ENCODE measurements at regions of chr9 and their contacts with region 1.

Region 1: DNA sequence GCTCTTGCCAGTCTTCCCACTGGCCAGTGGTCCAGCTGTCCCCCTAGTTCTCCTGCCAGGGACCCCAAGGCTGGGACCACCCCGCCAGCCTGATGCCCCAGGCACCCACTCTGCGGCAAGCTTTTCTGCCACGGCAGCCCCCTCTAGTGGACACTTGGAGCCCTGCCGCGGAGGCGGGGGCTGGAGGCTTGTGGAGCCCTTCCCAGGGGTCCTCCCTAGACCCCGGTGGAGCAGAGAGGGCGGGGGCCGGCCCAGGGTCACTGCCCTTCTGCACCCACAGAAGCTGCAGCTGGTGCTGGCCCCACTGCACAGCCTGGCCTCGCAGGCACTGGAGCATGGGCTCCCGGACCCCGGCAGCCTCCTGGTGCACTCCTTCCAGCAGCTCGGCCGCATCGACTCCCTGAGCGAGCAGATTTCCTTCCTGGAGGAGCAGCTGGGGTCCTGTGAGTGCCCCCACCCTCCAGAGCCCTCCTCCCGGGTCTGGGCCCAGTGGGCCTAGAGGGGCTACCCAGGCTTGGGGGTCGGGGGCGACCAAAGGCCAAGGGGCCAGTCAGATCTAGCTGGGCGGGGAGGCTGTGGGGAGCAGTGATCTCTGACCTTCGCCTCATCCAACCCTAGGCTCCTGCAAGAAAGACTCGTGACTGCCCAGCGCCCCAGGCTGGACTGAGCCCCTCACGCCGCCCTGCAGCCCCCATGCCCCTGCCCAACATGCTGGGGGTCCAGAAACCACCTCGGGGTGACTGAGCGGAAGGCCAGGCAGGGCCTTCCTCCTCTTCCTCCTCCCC is 9.1 kb downstream of the EGFL7 start:
- DNase-seq: peak; percentile 60
- ATAC-seq: peak; percentile 52
- H3K4me3 ChIP-seq: no peak overlapping the region
- H3K4me3 Mint-ChIP-seq: no peak overlapping the region
- H3K27ac ChIP-seq: no peak overlapping the region
- H3K27ac Mint-ChIP-seq: no peak overlapping the region
- H3K4me1 ChIP-seq: peaks cover 0 to 5% of the 10 kb centered on the region in 2 donors
- H3K4me1 Mint-ChIP-seq: peaks cover 3% of the 10 kb centered on the region
- H3K27me3 ChIP-seq: peaks cover 0 to 15% (median 5%) of the 10 kb centered on the region in 4 experiments
- H3K27me3 Mint-ChIP-seq: peaks cover 5% of the 10 kb centered on the region
- CTCF ChIP-seq: peak; percentile 85

Region 2: GRCh38 chr9:136539427-136540421 is 132.1 kb before region 1 on chr9:
- CTCF ChIA-PET with region 1: no interaction called
- POLR2A ChIA-PET with region 1: interaction called, 12 read pairs
- intact Hi-C with region 1: no loop called
- DNase-seq: peak; percentile 85
- ATAC-seq: peak; percentile 69
- H3K4me3 ChIP-seq: peak overlapping the region in 4 of 5 experiments; percentile 7 to 48 (median 26)
- H3K4me3 Mint-ChIP-seq: peak overlapping the region; percentile 83
- H3K27ac ChIP-seq: peak overlapping the region; percentile 57 to 80
- H3K27ac Mint-ChIP-seq: peak overlapping the region; percentile 89
- H3K4me1 ChIP-seq: peaks cover 63 to 75% of the 10 kb centered on the region in 2 donors
- H3K4me1 Mint-ChIP-seq: peaks cover 73% of the 10 kb centered on the region
- H3K27me3 ChIP-seq: no peaks in the 10 kb centered on the region
- H3K27me3 Mint-ChIP-seq: no peaks in the 10 kb centered on the region
- CTCF ChIP-seq: no peak

Region 3: GRCh38 chr9:136686794-136687711 is 15.2 kb after region 1 on chr9 and contains the start of gene AGPAT2:
- CTCF ChIA-PET with region 1: interaction called, 17 read pairs
- POLR2A ChIA-PET with region 1: no interaction called
- intact Hi-C with region 1: no loop called
- DNase-seq: peak; percentile 83
- ATAC-seq: peak; percentile 96
- H3K4me3 ChIP-seq: peak within 1 kb of the TSS; percentile 23 to 76 (median 72)
- H3K4me3 Mint-ChIP-seq: peak within 1 kb of the TSS; percentile 83
- H3K27ac ChIP-seq: peak within 1 kb of the TSS in 1 of 2 donors; percentile 64
- H3K27ac Mint-ChIP-seq: peak within 1 kb of the TSS; percentile 75
- H3K4me1 ChIP-seq: peaks cover 14 to 22% of the 10 kb centered on the region in 2 donors
- H3K4me1 Mint-ChIP-seq: peaks cover 14% of the 10 kb centered on the region
- H3K27me3 ChIP-seq: no peaks in the 10 kb centered on the region
- H3K27me3 Mint-ChIP-seq: no peaks in the 10 kb centered on the region
- CTCF ChIP-seq: no peak
- total RNA-seq, gene AGPAT2: 25.1 and 32.7 TPM in 2 replicates

Region 4: GRCh38 chr9:136695955-136696354 is 24.1 kb after region 1 on chr9:
- CTCF ChIA-PET with region 1: interaction called, 6 read pairs
- POLR2A ChIA-PET with region 1: interaction called, 15 read pairs
- intact Hi-C with region 1: no loop called
- DNase-seq: no peak
- ATAC-seq: no peak
- H3K4me3 ChIP-seq: no peak overlapping the region
- H3K4me3 Mint-ChIP-seq: no peak overlapping the region
- H3K27ac ChIP-seq: no peak overlapping the region
- H3K27ac Mint-ChIP-seq: no peak overlapping the region
- H3K4me1 ChIP-seq: peaks cover 15 to 32% of the 10 kb centered on the region in 2 donors
- H3K4me1 Mint-ChIP-seq: peaks cover 17% of the 10 kb centered on the region
- H3K27me3 ChIP-seq: peaks cover 0 to 34% (median 7%) of the 10 kb centered on the region in 4 experiments
- H3K27me3 Mint-ChIP-seq: peaks cover 11% of the 10 kb centered on the region
- CTCF ChIP-seq: no peak